Naive thymus-derived CD4-positive, alpha-beta T cell (primary cell): ENCODE measurements at regions of chr6 and their contacts with region 1.

Region 1: DNA sequence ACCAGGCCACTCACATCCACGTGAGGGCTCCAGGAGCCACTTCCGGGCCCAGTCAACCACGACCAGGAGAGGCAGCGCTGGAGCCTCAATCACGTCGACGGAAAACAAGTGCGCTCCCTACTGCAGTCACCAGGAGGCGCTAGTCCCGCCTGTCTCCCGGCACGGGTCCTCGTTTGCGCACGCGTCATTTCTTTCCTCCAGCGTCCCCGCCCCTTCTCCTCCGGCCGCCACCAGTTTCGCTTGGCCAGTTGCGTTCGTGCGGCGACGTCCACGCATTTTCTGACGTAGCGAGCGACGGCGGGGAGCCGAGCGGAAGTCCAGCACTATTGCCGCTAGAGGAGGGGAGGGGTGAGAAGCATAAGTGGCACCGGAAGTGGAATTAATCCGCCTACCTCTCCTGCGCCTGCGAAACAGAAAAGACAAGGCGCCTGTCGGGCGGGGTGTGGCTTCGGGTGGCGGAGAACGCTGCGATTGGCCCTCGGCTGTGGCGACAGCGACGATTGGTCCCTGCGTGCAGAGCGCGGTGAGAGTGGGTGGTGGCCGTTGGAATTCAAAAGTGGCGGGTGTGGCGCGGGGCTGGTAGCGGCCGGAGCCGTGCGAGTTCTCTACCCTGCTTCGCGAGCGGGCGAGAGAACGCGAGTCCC is at the start of gene KIFC1:
- DNase-seq: peak; percentile 94 to 99 (median 99)
- ATAC-seq: peak; percentile 92
- H3K4me3 ChIP-seq: peak within 1 kb of the TSS; percentile 58
- H3K4me3 Mint-ChIP-seq: peak within 1 kb of the TSS; percentile 82 to 93 (median 85)
- H3K27ac ChIP-seq: peak within 1 kb of the TSS; percentile 81
- H3K27ac Mint-ChIP-seq: peak within 1 kb of the TSS; percentile 94 to 98 (median 97)
- H3K4me1 ChIP-seq: peaks cover 13% of the 10 kb centered on the region in 2 donors
- H3K4me1 Mint-ChIP-seq: peaks cover 11 to 47% (median 22%) of the 10 kb centered on the region in 7 donors
- H3K27me3 ChIP-seq: no peaks in the 10 kb centered on the region
- H3K27me3 Mint-ChIP-seq: peaks cover 0 to 5% (median 0%) of the 10 kb centered on the region in 5 donors
- total RNA-seq, gene KIFC1: 0.65 to 87.9 (median 1.6) TPM

Region 2: DNA sequence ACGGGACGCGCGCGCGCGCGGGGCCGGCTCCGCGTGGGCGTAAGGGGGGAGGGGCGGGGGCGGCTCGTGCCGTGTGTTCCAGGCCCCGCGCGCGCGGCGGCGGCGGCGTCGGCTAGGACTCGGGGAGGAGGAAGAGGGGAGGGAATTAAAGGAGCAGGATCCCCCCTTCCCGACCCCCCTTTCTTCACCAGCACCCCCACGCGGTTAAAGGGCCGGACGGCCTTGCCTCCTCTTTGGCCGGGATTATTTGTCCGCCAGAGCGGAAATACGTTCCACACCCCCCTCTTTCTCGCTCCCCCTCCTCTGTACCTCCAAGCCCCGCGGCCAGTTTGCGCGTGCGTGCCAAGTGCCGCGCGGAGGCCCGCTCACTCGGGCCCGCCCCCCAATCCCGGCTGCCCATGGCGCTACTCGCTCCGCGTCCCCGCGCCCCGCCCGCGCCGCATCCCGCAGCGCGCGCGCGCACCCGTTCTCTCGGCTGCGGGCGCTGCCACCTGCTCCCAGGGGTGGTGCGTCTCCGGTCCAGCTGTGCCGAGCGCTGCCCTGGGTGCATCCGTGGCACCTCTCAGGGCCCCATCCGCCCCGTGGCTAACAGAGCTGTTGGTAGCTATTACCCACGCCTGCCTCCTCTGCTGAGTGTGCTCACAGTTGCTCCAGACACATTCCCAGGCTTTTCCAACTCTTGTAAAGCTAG is 1489.3 kb before region 1 on chr6 and contains the start of gene ZBTB12:
- CTCF ChIA-PET with region 1: no interaction called
- POLR2A ChIA-PET with region 1: no interaction called
- intact Hi-C with region 1: no loop called
- DNase-seq: peak; percentile 76 to 90 (median 84)
- ATAC-seq: peak; percentile 76
- H3K4me3 ChIP-seq: peak within 1 kb of the TSS; percentile 80
- H3K4me3 Mint-ChIP-seq: peak within 1 kb of the TSS; percentile 81 to 96 (median 88)
- H3K27ac ChIP-seq: peak within 1 kb of the TSS; percentile 83
- H3K27ac Mint-ChIP-seq: peak within 1 kb of the TSS; percentile 75 to 94 (median 86)
- H3K4me1 ChIP-seq: peaks cover 12 to 16% of the 10 kb centered on the region in 2 donors
- H3K4me1 Mint-ChIP-seq: peaks cover 18 to 34% (median 32%) of the 10 kb centered on the region in 7 donors
- H3K27me3 ChIP-seq: no peaks in the 10 kb centered on the region
- H3K27me3 Mint-ChIP-seq: peaks cover 0 to 11% (median 0%) of the 10 kb centered on the region in 5 donors
- total RNA-seq, gene ZBTB12: 0.77 to 4.5 (median 2.5) TPM

Region 3: GRCh38 chr6:33105916-33106871 is 285.2 kb before region 1 on chr6:
- CTCF ChIA-PET with region 1: no interaction called
- POLR2A ChIA-PET with region 1: no interaction called
- intact Hi-C with region 1: no loop called
- DNase-seq: no peak
- ATAC-seq: no peak
- H3K4me3 ChIP-seq: no peak overlapping the region
- H3K4me3 Mint-ChIP-seq: no peak overlapping the region
- H3K27ac ChIP-seq: no peak overlapping the region
- H3K27ac Mint-ChIP-seq: no peak overlapping the region
- H3K4me1 ChIP-seq: no peaks in the 10 kb centered on the region
- H3K4me1 Mint-ChIP-seq: peaks cover 0 to 7% (median 0%) of the 10 kb centered on the region in 7 donors
- H3K27me3 ChIP-seq: no peaks in the 10 kb centered on the region
- H3K27me3 Mint-ChIP-seq: peaks cover 42 to 66% (median 49%) of the 10 kb centered on the region in 5 donors

Region 4: DNA sequence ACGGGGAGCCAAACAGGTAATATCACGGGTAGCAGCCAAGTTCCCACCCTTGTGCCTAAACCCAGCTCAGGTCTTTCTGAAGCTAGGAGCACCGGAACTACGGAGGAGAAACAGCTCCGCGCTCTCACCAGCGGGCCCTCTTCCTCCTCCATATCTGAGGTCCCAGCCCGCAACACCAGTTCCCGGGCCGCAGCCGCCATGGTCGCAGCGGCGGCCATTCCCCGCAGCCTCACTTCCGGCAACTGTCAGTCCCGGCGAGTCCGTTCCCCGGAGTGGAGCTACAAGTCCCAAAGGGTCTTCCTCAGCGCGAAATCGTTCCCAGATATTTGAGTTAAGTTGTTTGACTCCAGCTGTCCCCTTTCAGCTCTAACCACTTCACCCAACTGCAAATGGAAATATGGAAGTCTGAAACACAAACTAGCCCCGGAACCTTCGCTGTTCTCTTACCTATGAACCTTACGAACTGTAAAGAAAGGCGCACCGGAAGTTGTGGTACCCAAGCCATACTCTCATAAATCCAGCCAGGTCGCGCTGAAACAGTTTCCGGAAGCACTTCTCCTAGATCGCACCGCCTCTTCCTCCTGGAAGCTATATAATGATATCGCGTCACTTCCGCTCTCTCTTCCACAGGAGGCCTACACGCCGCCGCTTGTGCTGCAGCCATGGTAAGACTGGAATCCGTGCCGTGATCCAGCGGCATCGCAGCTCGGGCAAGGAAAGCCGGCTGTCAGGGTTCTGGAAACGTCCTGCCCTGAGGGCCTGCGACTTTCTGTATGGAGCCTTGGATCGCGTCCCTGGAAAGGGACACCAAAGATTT is 119.7 kb before region 1 on chr6 and contains the starts of genes RPS18 and VPS52:
- CTCF ChIA-PET with region 1: no interaction called
- POLR2A ChIA-PET with region 1: interaction called, 6 read pairs
- intact Hi-C with region 1: loop called (anchors 1 kb)
- DNase-seq: peak; percentile 84 to 97 (median 93)
- ATAC-seq: peak; percentile 91
- H3K4me3 ChIP-seq: peak within 1 kb of the TSS; percentile 93
- H3K4me3 Mint-ChIP-seq: peak within 1 kb of the TSS; percentile 87 to 100 (median 98)
- H3K27ac ChIP-seq: peak within 1 kb of the TSS; percentile 91
- H3K27ac Mint-ChIP-seq: peak within 1 kb of the TSS; percentile 95 to 100 (median 99)
- H3K4me1 ChIP-seq: peaks cover 41 to 44% of the 10 kb centered on the region in 2 donors
- H3K4me1 Mint-ChIP-seq: peaks cover 34 to 81% (median 66%) of the 10 kb centered on the region in 7 donors
- H3K27me3 ChIP-seq: no peaks in the 10 kb centered on the region
- H3K27me3 Mint-ChIP-seq: peaks cover 0 to 3% (median 0%) of the 10 kb centered on the region in 5 donors
- total RNA-seq, gene RPS18: 2,454 to 4,896 (median 3,431) TPM
- total RNA-seq, gene VPS52: 74.3 to 110 (median 90.5) TPM

Region 5: GRCh38 chr6:33323623-33323948 is 67.8 kb before region 1 on chr6:
- CTCF ChIA-PET with region 1: interaction called, 3 read pairs
- POLR2A ChIA-PET with region 1: no interaction called
- intact Hi-C with region 1: loop called (anchors 1 kb)
- DNase-seq: peak in 1 of 9 donors; percentile 26
- ATAC-seq: no peak
- H3K4me3 ChIP-seq: peak overlapping the region; percentile 64
- H3K4me3 Mint-ChIP-seq: peak overlapping the region; percentile 81 to 100 (median 98)
- H3K27ac ChIP-seq: peak overlapping the region; percentile 84
- H3K27ac Mint-ChIP-seq: peak overlapping the region; percentile 89 to 99 (median 97)
- H3K4me1 ChIP-seq: peaks cover 41% of the 10 kb centered on the region in 2 donors
- H3K4me1 Mint-ChIP-seq: peaks cover 34 to 59% (median 53%) of the 10 kb centered on the region in 7 donors
- H3K27me3 ChIP-seq: no peaks in the 10 kb centered on the region
- H3K27me3 Mint-ChIP-seq: peaks cover 0 to 4% (median 0%) of the 10 kb centered on the region in 5 donors

Region 6: DNA sequence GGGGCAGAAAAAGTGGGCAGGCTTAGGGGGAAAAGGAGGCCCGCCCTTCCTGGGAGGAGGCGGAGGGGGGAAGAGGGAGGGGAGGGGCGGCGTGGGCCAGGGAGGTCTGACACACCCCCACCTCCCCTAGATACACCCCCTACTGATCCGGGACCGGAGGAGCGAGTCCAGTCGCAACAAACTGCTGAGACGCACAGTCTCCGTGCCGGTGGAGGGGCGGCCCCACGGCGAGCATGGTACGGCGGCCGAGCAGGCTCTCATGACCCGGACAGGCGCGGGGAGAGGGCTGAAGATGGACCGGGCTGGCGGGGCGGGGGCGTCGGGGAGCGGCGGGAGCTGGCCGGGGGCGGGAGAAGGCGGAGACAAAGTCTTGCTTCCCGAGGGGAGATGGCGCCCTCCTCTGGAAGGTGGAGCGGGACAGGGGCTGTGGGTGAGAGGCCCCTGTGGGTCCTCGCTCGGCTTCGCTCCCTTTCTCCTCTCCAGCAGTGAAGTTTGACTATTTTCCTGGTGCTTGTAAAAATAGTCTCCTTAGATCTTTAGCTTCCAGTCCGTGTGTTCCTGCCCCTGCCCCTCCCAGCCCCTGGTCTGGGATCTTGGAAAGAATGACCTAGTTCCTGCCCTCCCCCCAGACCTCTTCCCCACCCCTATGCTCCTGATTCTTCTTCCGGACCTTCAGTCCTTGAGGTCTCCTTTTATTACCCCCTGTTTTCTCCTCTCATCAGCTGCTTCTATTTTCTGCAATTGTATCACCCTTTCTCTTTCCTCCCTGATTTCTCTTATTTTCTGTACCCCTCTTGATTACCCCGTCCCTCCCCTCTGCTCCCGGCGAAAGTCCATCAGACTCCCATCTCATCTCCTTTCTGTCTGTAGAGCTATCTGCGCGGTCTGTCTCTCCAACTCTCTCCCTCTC is 34.5 kb after region 1 on chr6:
- CTCF ChIA-PET with region 1: interaction called, 7 read pairs
- POLR2A ChIA-PET with region 1: interaction called, 12 read pairs
- intact Hi-C with region 1: loop called (anchors 1 kb)
- DNase-seq: peak; percentile 57 to 85 (median 74)
- ATAC-seq: peak; percentile 72
- H3K4me3 ChIP-seq: peak overlapping the region; percentile 73
- H3K4me3 Mint-ChIP-seq: peak overlapping the region; percentile 84 to 98 (median 95)
- H3K27ac ChIP-seq: peak overlapping the region; percentile 88
- H3K27ac Mint-ChIP-seq: peak overlapping the region; percentile 88 to 99 (median 95)
- H3K4me1 ChIP-seq: peaks cover 43 to 46% of the 10 kb centered on the region in 2 donors
- H3K4me1 Mint-ChIP-seq: peaks cover 64 to 89% (median 82%) of the 10 kb centered on the region in 7 donors
- H3K27me3 ChIP-seq: no peaks in the 10 kb centered on the region
- H3K27me3 Mint-ChIP-seq: no peaks in the 10 kb centered on the region

Region 7: DNA sequence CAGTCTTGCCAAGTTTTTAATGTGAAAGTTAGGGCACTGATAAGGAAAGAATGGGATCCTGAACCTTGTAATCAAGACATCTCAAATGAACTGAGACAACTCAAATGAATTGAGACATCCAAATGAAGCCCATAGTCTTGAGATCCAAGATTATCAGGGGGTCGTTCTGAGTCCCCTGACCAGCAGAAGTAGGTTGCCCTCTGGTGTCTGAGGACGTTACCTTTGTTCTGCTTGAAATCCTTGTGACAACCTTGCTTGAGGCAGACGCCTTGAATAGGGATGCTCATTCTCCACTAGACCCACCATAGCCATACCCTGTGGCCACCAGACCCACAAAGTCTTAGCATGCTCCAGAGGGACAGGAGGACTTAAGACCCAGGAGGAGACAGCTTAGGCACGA is 100.7 kb after region 1 on chr6:
- CTCF ChIA-PET with region 1: no interaction called
- POLR2A ChIA-PET with region 1: no interaction called
- intact Hi-C with region 1: loop called in 1 of 2 experiments (anchors 1 kb)
- DNase-seq: no peak
- ATAC-seq: no peak
- H3K4me3 ChIP-seq: no peak overlapping the region
- H3K4me3 Mint-ChIP-seq: no peak overlapping the region
- H3K27ac ChIP-seq: no peak overlapping the region
- H3K27ac Mint-ChIP-seq: peak overlapping the region in 1 of 9 donors; percentile 28
- H3K4me1 ChIP-seq: no peaks in the 10 kb centered on the region
- H3K4me1 Mint-ChIP-seq: peaks cover 0 to 4% (median 0%) of the 10 kb centered on the region in 7 donors
- H3K27me3 ChIP-seq: no peaks in the 10 kb centered on the region
- H3K27me3 Mint-ChIP-seq: peaks cover 0 to 31% (median 5%) of the 10 kb centered on the region in 5 donors

Region 8: GRCh38 chr6:33620856-33621710 is 229.7 kb after region 1 on chr6 and contains the start of gene ITPR3:
- CTCF ChIA-PET with region 1: no interaction called
- POLR2A ChIA-PET with region 1: no interaction called
- intact Hi-C with region 1: loop called (anchors 1 kb)
- DNase-seq: peak; percentile 63 to 83 (median 80)
- ATAC-seq: peak; percentile 94
- H3K4me3 ChIP-seq: peak within 1 kb of the TSS; percentile 80
- H3K4me3 Mint-ChIP-seq: peak within 1 kb of the TSS; percentile 91 to 97 (median 96)
- H3K27ac ChIP-seq: peak within 1 kb of the TSS; percentile 97
- H3K27ac Mint-ChIP-seq: peak within 1 kb of the TSS; percentile 82 to 96 (median 94)
- H3K4me1 ChIP-seq: peaks cover 9 to 35% of the 10 kb centered on the region in 2 donors
- H3K4me1 Mint-ChIP-seq: peaks cover 29 to 74% (median 66%) of the 10 kb centered on the region in 7 donors
- H3K27me3 ChIP-seq: no peaks in the 10 kb centered on the region
- H3K27me3 Mint-ChIP-seq: peaks cover 0 to 2% (median 0%) of the 10 kb centered on the region in 5 donors
- total RNA-seq, gene ITPR3: 35.6 to 65.7 (median 47.7) TPM